Left cardiac atrium (tissue), 4 donors: ENCODE measurements at regions of chr6 and their contacts with region 1.

Region 1: DNA sequence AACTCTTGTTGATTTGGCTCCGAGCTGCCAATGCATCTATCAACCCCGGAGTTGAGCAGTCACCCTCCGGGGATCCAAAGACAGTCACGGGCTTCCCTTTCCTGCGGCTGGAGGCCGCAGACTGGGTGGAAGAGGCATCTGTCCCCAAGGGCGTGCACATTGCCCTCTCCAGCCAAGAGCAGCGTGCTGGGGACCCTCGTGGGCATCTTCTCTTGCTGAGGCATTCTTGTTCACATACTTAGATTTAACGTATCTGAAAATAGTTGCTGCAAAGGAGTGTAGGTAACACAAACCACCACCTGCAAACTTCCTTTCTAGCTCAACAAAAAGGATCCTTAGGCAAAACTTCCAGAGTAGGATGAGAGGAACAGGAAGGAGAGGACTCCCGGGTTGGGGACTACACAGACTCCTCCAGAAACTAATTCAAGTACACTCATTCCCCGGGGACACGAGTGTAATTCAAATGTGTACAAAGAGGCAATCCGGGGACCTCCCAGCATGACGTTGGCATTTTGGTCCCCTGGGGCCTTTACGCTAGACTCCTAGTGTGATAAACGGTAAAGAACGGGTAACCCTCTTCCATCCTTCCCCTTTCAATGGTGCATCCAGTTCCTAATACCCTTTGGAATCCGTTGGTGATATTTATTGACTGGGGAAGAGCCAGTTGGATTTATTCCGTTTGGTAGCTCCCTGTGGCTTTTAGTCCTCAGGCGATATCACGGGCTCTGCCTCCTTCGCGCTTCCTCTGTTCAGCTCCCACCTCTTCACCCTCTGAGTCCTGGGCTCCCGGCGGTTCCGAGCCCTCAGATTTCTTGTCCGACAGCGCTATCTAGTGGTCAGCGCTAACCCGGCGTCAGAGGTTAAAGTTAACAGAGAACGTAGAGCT is 2.7 kb upstream of the COL12A1 start:
- DNase-seq: peak; percentile 82
- ATAC-seq: peak; percentile 59 to 70

Region 2: DNA sequence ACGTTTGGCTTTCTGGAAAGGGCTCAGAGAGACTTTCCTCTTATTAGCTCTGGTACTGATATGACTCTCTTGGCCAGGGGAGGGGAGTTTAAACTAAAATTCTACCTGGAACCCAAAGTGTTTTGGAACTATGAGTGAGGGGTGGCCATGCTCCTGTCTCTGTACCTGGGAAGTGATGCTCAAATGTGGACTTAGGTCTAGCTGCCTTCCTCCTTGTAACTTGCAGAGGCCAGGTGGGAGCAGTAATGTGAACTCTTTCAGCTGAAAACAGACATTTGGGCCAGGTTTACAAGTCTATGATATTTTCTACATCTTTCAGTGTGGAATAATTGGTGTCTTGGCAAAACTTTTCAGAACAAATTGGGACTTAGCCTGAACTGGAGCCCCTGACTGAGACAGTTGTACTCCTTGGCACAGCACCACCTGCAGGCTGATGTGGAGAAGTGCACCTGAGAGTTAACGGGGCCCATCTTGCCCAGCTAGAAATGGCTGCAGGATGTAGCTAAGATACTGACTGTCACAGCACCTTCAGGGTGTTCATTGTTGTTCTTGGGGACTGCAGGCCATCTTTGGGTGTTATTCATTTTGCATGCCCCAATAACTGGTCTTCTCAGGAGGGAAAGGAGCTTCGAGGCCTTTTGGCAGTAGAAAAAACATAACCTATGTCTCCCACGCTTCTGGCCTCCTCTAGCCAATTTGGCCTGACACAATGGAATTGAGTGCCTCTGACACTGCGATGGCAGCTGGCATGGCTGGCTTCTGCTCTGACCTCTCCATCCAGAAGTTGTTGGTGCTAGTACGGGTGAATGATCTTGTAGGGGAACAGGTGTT is 1475.5 kb before region 1 on chr6:
- intact Hi-C with region 1: loop called in 1 of 2 experiments (anchors 10 kb)
- DNase-seq: peak; percentile 57
- ATAC-seq: peak; percentile 81 to 87

Region 3: GRCh38 chr6:73854998-73855718 is 1353.4 kb before region 1 on chr6:
- intact Hi-C with region 1: loop called in 1 of 2 experiments (anchors 10 kb)
- DNase-seq: no peak
- ATAC-seq: peak; percentile 30 to 37

Region 4: GRCh38 chr6:74091136-74091793 is 1117.3 kb before region 1 on chr6:
- intact Hi-C with region 1: loop called (anchors 2 to 10 kb)
- DNase-seq: no peak
- ATAC-seq: peak; percentile 45 to 47

Region 5: GRCh38 chr6:74939721-74940620 is 268.6 kb before region 1 on chr6:
- intact Hi-C with region 1: loop called in 1 of 2 experiments (anchors 5 kb)
- DNase-seq: no peak
- ATAC-seq: no peak

Region 6: GRCh38 chr6:76330031-76330430 is 1121.5 kb after region 1 on chr6:
- intact Hi-C with region 1: no loop called
- DNase-seq: no peak
- ATAC-seq: no peak